ENCODE measurements at regions of chr14 and their contacts with region 1.

Region 1: DNA sequence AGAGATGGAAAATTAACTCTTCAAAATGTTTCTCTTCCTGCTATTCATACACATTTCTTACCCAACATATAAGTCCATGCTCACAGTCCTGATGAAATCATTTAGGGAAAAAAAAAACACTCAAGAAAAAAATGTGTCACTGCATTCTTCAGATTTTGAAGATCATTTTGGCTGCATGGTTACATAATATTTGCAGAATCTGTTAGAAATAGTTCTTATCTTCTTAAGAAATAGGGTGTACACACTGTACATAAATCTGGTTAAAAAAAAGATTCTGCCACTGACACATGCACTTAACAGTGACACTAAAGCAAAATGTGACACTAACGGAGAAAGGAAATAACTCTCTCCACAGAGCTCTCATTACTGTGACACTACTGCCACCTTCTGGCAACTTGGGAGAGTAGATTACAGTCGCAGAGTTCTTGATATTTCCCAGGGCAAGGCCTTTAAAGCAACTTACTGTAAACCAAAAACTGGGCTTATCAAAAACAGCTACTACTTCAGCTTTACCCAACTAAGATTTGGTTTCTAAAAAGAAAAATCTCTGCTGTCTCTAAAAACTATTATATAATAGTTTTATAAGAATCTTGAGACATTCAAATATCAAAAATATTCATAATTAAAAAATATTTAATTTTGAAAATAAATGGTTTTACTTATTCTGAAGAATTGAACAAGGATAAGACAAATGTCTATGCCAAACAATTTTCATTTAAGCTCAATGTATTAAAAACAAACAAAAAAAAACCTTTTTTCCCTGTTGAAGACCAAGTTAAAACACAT is 65.0 kb downstream of the SETD3 start:
- DNase-seq: peak; percentile 50 to 81 (median 58)
- ATAC-seq: peak; percentile 95
- H3K4me3 ChIP-seq: no peak overlapping the region
- H3K27ac ChIP-seq: no peak overlapping the region
- H3K4me1 ChIP-seq: peaks cover 4 to 12% of the 10 kb centered on the region in 2 experiments; a peak in 4 of 5 replicates
- H3K27me3 ChIP-seq: no peaks in the 10 kb centered on the region
- CTCF ChIP-seq: peak; percentile 65 to 80 (median 70)
- EP300 ChIP-seq: no peak
- POLR2A ChIP-seq: no peak
- RAD21 ChIP-seq: peak; percentile 33 to 66

Region 2: GRCh38 chr14:99318959-99319295 is 96.8 kb before region 1 on chr14:
- CTCF ChIA-PET with region 1: no interaction called
- POLR2A ChIA-PET with region 1: no interaction called
- in situ Hi-C with region 1: no loop called
- intact Hi-C with region 1: loop called (anchors 1 kb)
- DNase-seq: no peak
- ATAC-seq: no peak
- H3K4me3 ChIP-seq: no peak overlapping the region
- H3K27ac ChIP-seq: no peak overlapping the region
- H3K4me1 ChIP-seq: peaks cover 0 to 12% of the 10 kb centered on the region in 2 experiments; a peak in 2 of 5 replicates
- H3K27me3 ChIP-seq: peaks cover 0 to 13% of the 10 kb centered on the region in 2 experiments; a peak in 3 of 5 replicates
- CTCF ChIP-seq: no peak
- EP300 ChIP-seq: no peak
- POLR2A ChIP-seq: no peak
- RAD21 ChIP-seq: no peak

Region 3: GRCh38 chr14:99393047-99393655 is 22.5 kb before region 1 on chr14:
- CTCF ChIA-PET with region 1: interaction called, 7 read pairs
- POLR2A ChIA-PET with region 1: interaction called, 3 read pairs
- in situ Hi-C with region 1: no loop called
- intact Hi-C with region 1: loop called (anchors 1 kb)
- DNase-seq: peak; percentile 55 to 68 (median 61)
- ATAC-seq: peak; percentile 91
- H3K4me3 ChIP-seq: no peak overlapping the region
- H3K27ac ChIP-seq: no peak overlapping the region
- H3K4me1 ChIP-seq: peaks cover 0 to 6% of the 10 kb centered on the region in 2 experiments; a peak in 1 of 5 replicates
- H3K27me3 ChIP-seq: peaks cover 0 to 8% of the 10 kb centered on the region in 2 experiments; a peak in 2 of 5 replicates
- CTCF ChIP-seq: peak; percentile 64 to 83 (median 67)
- EP300 ChIP-seq: no peak
- POLR2A ChIP-seq: no peak
- RAD21 ChIP-seq: peak in 1 of 2 experiments; percentile 33; a peak in 2 of 4 replicates